ENCODE measurements at regions of chr4 and their contacts with region 1.

Region 1: DNA sequence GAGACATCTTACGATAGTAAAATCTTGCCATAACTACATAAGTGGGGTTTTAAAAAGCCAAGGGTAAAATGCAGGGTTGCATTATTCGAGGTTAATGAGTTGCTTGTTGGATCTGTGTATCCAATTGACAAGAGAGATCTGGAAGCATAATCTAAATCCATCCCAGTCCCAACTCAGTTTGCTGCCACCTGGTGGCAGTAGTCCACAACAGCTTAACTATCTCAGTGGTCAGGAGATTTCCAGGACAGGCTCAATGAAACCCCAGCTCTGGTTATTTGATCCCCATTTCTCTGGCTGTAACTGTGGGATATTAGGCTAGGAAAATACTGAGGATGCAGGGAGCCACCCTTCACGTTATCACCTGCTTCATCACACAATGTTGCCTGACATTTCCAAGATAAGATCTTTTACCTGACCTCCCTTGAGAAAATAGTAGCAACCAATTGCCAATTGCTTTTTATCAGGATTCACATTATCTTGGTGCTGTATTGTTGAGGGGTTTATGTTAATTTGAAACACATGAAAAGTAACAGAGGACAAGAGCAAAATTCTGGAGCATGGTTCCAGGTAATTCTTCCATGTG is 88.2 kb upstream of the TNIP3 start:
- DNase-seq: peak; percentile 85
- H3K4me3 Mint-ChIP-seq: no peak overlapping the region
- H3K27ac Mint-ChIP-seq: no peak overlapping the region
- H3K4me1 Mint-ChIP-seq: peaks cover 43% of the 10 kb centered on the region
- H3K27me3 Mint-ChIP-seq: no peaks in the 10 kb centered on the region

Region 2: GRCh38 chr4:121041307-121042090 is 210.8 kb before region 1 on chr4:
- intact Hi-C with region 1: loop called (anchors 5 kb)
- DNase-seq: peak; percentile 72
- H3K4me3 Mint-ChIP-seq: no peak overlapping the region
- H3K27ac Mint-ChIP-seq: peak overlapping the region; percentile 0
- H3K4me1 Mint-ChIP-seq: peaks cover 11% of the 10 kb centered on the region
- H3K27me3 Mint-ChIP-seq: peaks cover 49% of the 10 kb centered on the region

Region 3: DNA sequence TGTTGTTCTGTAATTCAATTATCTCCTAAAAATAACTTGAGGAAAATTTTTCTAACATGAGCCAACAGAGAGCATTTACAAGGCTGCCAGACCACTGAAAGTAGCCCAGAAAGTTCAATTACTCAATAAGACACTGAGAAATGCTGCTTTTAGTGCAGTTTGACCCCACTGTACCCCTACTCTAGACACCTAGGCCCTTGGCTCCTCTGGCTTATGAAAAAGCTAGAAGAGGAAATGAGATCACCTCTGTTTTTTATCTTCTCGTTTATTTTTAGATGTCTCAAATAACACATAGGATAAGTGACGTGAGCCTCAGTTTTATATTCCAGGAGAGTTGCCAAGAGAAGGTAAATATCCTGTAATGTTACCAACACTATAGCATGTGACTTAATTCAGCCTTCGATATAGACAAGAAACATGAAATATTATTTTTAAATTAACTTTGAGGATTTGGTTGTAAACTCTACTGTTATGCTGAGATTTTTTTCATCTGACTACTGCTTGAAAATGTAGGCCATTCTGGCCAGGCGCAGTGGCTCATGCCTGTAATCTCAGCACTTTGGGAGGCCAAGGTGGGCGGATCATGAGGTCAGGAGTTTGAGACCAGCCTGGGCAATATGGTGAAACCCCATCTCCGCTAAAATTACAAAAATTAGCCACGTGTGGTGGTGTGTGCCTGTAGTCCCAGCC is 112.6 kb before region 1 on chr4:
- intact Hi-C with region 1: loop called (anchors 5 kb)
- DNase-seq: no peak
- H3K4me3 Mint-ChIP-seq: peak overlapping the region; percentile 26
- H3K27ac Mint-ChIP-seq: peak overlapping the region; percentile 78
- H3K4me1 Mint-ChIP-seq: peaks cover 45% of the 10 kb centered on the region
- H3K27me3 Mint-ChIP-seq: peaks cover 1% of the 10 kb centered on the region

Region 4: DNA sequence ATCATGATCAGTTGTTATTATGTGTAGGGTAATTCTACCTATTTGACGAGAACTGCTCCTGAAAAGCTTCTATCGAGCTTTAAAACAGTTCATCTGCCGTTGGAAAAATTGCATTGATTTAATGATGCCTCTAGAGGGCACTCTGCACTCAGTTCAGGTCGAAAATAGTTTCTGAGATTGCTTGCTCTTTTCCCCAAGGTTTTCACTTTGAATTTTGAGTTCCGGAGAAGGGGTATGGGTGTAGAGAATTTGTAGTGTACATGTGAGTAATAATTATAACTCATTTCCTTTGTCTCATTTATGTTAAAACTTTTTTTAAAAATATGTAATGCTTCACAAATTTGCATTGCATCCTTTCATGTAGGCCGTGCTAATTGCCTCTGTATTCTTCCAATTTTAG is 59.8 kb before region 1 on chr4:
- intact Hi-C with region 1: loop called (anchors 1 kb)
- DNase-seq: peak; percentile 75
- H3K4me3 Mint-ChIP-seq: peak overlapping the region; percentile 53
- H3K27ac Mint-ChIP-seq: no peak overlapping the region
- H3K4me1 Mint-ChIP-seq: peaks cover 45% of the 10 kb centered on the region
- H3K27me3 Mint-ChIP-seq: no peaks in the 10 kb centered on the region

Region 5: GRCh38 chr4:121278811-121279368 is 26.6 kb after region 1 on chr4:
- intact Hi-C with region 1: loop called (anchors 1 kb)
- DNase-seq: no peak
- H3K4me3 Mint-ChIP-seq: no peak overlapping the region
- H3K27ac Mint-ChIP-seq: peak overlapping the region; percentile 35
- H3K4me1 Mint-ChIP-seq: peaks cover 2% of the 10 kb centered on the region
- H3K27me3 Mint-ChIP-seq: peaks cover 28% of the 10 kb centered on the region

Region 6: GRCh38 chr4:121696581-121697461 is 444.5 kb after region 1 on chr4 and contains the start of gene ANXA5:
- intact Hi-C with region 1: loop called (anchors 2 kb)
- DNase-seq: peak; percentile 94
- H3K4me3 Mint-ChIP-seq: peak within 1 kb of the TSS; percentile 98
- H3K27ac Mint-ChIP-seq: peak within 1 kb of the TSS; percentile 100
- H3K4me1 Mint-ChIP-seq: peaks cover 39% of the 10 kb centered on the region
- H3K27me3 Mint-ChIP-seq: peaks cover 33% of the 10 kb centered on the region
- total RNA-seq, gene ANXA5: 107 TPM in 2 replicates

Measured in activated CD4-positive, alpha-beta T cell treated with anti-CD3 and anti-CD28 coated beads, Interleukin-2, amount 10 ng/mL, durations not matched to agents 24 days and 14 days (primary cell).